Tibial artery (tissue), 4 donors: ENCODE measurements at regions of chr5 and their contacts with region 1.

Region 1: GRCh38 chr5:137051165-137051564 is 448.0 kb downstream of the SPOCK1 start:
- DNase-seq: no peak
- H3K4me3 ChIP-seq: no peak overlapping the region
- H3K27ac ChIP-seq: no peak overlapping the region
- H3K4me1 ChIP-seq: peaks cover 0 to 7% (median 2%) of the 10 kb centered on the region in 4 donors
- H3K27me3 ChIP-seq: no peaks in the 10 kb centered on the region
- CTCF ChIP-seq: no peak

Region 2: DNA sequence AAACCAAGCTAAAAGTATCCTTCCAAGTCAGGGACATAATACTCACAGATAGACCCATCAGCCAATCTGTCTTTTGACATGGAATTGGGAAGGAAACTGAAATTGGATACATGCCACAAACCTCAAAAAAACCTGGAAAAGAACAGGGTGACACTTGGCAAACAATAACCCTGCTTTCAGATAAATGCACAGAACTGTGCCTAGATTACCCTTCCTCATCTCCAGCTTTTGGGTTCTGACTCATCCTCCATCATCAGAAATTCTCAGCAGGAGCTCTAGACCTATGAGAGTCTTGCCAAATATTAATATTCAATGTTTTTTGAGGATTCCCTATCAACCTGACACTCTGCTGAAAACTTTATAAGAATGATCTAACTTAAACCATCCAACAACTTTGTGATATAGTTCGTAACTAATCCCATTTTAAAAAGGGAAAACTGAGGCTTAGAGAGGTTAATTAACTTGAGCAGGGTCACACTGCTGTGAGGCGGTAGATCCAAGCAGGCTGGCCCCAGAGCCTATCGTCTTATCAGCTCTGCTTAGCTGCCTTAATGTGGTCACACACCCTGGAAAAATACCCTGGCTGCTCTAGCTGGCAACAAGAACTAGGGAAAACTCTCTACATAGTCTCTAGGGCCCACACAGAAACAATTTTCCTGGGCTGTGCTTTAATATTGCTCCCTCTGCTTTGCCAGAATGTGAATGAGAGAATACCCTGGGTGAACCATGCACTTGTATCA is 528.8 kb before region 1 on chr5:
- intact Hi-C with region 1: loop called (anchors 10 kb)
- DNase-seq: no peak
- H3K4me3 ChIP-seq: no peak overlapping the region
- H3K27ac ChIP-seq: no peak overlapping the region
- H3K4me1 ChIP-seq: no peaks in the 10 kb centered on the region
- H3K27me3 ChIP-seq: no peaks in the 10 kb centered on the region
- CTCF ChIP-seq: no peak